Heart right ventricle (tissue), 16 donors: ENCODE measurements at regions of chr1 and their contacts with region 1.

Region 1: DNA sequence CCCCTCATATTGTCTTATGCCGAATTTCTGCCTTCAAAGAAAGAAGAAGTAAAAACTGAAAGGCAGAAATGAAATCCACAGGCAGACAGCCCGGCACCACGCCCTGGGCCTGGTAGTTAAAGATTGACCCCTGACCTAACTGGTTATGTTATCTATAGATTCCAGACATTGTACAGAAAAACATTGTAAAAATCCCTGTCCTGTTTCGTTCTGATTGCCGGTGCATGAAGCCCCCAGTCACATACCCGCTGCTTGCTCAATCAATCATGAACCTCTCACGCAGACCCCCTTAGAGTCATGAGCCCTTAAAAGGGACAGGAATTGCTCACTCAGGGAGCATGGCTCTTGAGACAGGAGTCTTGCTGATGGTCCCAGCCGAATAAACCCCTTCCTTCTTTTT is 49.3 kb downstream of the JMJD4 start:
- DNase-seq: no peak
- ATAC-seq: no peak
- H3K4me3 ChIP-seq: no peak overlapping the region
- H3K27ac ChIP-seq: no peak overlapping the region
- H3K4me1 ChIP-seq: no peaks in the 10 kb centered on the region
- H3K27me3 ChIP-seq: no peaks in the 10 kb centered on the region
- CTCF ChIP-seq: no peak

Region 2: DNA sequence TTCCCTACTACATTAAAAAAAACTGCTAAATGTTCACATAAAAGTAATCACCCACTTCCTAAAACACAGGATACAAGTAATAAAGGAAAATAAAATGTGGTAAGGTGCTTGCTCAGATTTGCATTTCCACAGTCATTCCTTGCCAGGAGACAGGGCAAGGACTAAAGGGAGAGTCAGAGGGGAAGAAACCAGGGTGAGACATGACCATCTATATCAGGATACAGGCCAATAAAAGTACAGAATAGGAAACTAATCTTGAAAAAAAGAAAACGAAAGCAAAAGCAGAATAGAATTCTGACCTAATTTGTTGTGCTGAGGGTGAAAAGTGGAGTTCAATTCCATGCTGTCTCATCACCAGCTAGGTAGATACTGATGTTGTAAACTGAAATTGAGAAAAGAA is 22.0 kb after region 1 on chr1:
- intact Hi-C with region 1: loop called in 1 of 10 experiments (anchors 2 kb)
- DNase-seq: no peak
- ATAC-seq: no peak
- H3K4me3 ChIP-seq: no peak overlapping the region
- H3K27ac ChIP-seq: no peak overlapping the region
- H3K4me1 ChIP-seq: no peaks in the 10 kb centered on the region
- H3K27me3 ChIP-seq: peaks cover 0 to 3% (median 0%) of the 10 kb centered on the region in 7 donors
- CTCF ChIP-seq: no peak

Region 3: DNA sequence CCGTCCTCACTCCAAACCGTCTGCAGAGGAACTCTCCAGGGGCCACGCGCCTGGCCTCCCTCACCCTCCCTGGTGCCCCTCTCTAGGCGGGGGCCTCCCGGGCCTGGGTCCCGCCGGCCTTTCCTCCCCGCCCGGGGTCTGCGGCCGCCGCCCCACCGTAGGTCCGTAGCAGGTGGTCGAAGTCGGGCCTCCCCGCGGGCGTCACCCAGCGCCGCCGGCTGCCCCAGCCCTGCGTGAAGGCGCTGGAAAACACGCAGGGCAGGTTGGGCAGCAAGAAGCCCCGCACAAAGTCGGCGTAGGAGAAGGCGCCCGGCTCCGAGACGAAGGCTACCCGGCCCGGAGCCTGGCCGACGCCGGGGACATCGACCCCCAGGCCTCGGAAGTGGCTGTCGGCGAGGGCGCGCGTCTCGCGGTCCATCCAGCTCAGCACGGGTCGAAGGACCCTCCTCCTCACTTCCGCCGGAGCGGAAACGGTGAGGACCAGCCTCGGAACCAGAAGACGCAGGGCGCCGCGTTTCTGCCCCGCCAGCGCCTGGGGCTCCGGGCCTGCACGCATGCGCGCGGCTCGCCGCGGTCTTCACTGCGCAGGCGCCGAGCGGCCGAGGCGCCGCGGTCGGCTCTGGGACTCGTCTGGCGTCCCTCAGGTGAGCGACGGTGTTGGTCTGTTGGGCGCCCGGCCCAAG is 49.2 kb after region 1 on chr1 and contains the starts of genes JMJD4 and SNAP47:
- intact Hi-C with region 1: no loop called
- DNase-seq: peak; percentile 92 to 93
- ATAC-seq: peak; percentile 89 to 95 (median 92)
- H3K4me3 ChIP-seq: peak within 1 kb of the TSS; percentile 74 to 100 (median 92)
- H3K27ac ChIP-seq: peak within 1 kb of the TSS; percentile 70 to 96 (median 92)
- H3K4me1 ChIP-seq: peaks cover 7 to 49% (median 33%) of the 10 kb centered on the region in 9 donors
- H3K27me3 ChIP-seq: no peaks in the 10 kb centered on the region
- CTCF ChIP-seq: no peak
- total RNA-seq, gene JMJD4: 7.6 to 13.4 (median 9.9) TPM
- total RNA-seq, gene SNAP47: 23.2 to 102 (median 65.4) TPM

Region 4: DNA sequence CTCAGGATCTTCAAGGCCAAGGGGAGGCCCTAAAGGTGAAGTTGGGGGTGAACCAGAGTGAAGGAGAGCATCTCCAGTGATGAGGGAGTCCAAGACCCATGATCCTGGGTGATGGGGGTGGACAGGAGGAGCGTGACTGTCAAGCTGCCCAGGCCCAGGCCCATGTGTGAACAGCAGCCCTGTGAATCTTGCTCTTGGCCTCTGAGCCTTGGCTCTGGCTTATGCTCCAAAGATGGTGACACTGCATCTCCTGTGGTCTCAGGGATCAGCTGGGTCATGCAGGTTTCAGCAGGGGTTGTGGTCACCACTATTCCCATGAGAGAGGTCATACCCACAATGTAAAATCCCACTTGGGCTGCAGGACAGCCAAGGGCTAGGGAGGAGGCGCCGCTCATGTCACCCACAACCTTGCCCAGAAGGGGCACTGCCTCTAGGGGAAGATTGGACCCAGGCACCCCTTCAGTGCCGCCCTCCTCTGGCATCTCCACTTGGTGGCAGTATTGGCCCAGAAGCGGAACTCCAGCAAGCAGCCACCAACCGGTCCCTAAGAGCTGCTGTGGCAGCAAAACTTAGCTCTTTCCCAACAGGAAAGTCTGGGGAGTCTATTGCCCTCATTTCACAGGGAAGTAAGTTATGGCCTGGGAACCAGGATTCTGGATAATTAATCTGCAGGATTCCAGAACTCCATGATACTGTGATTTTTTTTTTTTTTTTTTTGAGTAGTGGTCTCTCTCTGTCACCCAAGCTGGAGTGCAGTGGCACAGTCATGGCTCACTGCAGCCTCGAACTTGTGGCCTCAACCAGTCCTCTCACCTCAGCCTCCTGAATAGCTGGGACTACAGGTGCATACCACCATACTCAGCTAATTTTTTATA is 313.5 kb after region 1 on chr1:
- intact Hi-C with region 1: no loop called
- DNase-seq: peak; percentile 49 to 53
- ATAC-seq: peak; percentile 68 to 92 (median 88)
- H3K4me3 ChIP-seq: no peak overlapping the region
- H3K27ac ChIP-seq: no peak overlapping the region
- H3K4me1 ChIP-seq: no peaks in the 10 kb centered on the region
- H3K27me3 ChIP-seq: peaks cover 0 to 49% (median 28%) of the 10 kb centered on the region in 7 donors
- CTCF ChIP-seq: peak; percentile 43 to 78 (median 70)